ENCODE measurements at regions of chr2 and their contacts with region 1.

Region 1: DNA sequence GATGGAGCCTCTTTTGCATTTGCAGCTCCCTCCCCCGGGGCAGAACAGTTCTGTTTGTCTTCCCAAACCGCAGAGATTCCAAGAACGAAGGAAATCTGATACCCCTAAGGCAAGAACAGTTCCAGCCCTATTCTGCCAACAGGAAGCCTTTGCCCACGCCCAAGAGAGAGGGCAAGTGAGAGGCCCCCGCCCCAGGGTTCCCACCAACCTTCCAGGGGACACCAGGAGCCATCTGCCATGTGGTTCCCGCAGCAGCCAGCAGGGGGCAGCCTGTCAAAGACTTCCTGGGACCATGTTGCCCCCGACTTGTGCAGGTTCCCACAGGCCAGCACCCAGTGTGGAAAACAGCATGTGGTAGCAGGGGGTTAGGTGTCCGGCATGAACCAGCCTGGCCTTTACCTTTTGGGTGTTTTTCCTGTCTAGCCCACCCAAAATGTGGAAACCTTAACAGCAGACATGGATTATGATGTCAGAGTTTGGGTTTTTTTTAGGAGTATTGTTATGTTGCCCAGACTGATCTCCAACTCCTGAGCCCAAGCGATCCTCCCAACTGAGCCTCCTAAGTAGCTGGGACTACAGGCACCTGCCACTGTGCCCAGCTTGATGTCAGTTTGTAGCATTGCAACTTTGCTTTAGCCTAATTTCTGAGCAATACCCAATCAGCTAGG is 21.7 kb upstream of the EFHD1 start:
- DNase-seq: peak; percentile 70

Region 2: GRCh38 chr2:232623783-232624727 is 12.4 kb after region 1 on chr2:
- CTCF ChIA-PET with region 1: interaction called, 14 read pairs
- POLR2A ChIA-PET with region 1: no interaction called
- DNase-seq: no peak

Region 3: GRCh38 chr2:232761301-232761907 is 149.7 kb after region 1 on chr2:
- CTCF ChIA-PET with region 1: no interaction called
- POLR2A ChIA-PET with region 1: no interaction called
- DNase-seq: peak; percentile 20

Measured in HEK293T (cell line).